Activated CD4-positive, alpha-beta memory T cell treated with anti-CD3 and anti-CD28 coated beads for 36 hours (primary cell): ENCODE measurements at regions of chr2 and their contacts with region 1.

Region 1: GRCh38 chr2:42244520-42244919 is 75.4 kb downstream of the EML4 start:
- DNase-seq: no peak
- H3K4me3 Mint-ChIP-seq: no peak overlapping the region
- H3K27ac Mint-ChIP-seq: no peak overlapping the region
- H3K4me1 Mint-ChIP-seq: peaks cover 51% of the 10 kb centered on the region
- H3K27me3 Mint-ChIP-seq: no peaks in the 10 kb centered on the region

Region 2: GRCh38 chr2:42060718-42061619 is 183.6 kb before region 1 on chr2:
- CTCF ChIA-PET with region 1: no interaction called
- POLR2A ChIA-PET with region 1: no interaction called
- intact Hi-C with region 1: no loop called
- DNase-seq: no peak
- H3K4me3 Mint-ChIP-seq: no peak overlapping the region
- H3K27ac Mint-ChIP-seq: no peak overlapping the region
- H3K4me1 Mint-ChIP-seq: no peaks in the 10 kb centered on the region
- H3K27me3 Mint-ChIP-seq: peaks cover 2% of the 10 kb centered on the region

Region 3: GRCh38 chr2:42296226-42296625 is 51.7 kb after region 1 on chr2:
- CTCF ChIA-PET with region 1: no interaction called
- POLR2A ChIA-PET with region 1: no interaction called
- intact Hi-C with region 1: loop called (anchors 5 kb)
- DNase-seq: no peak
- H3K4me3 Mint-ChIP-seq: no peak overlapping the region
- H3K27ac Mint-ChIP-seq: peak overlapping the region; percentile 71
- H3K4me1 Mint-ChIP-seq: peaks cover 65% of the 10 kb centered on the region
- H3K27me3 Mint-ChIP-seq: no peaks in the 10 kb centered on the region